ENCODE measurements at regions of chr10 and their contacts with region 1.

Region 1: GRCh38 chr10:103757531-103758293 is 97.7 kb downstream of the SH3PXD2A start:
- DNase-seq: no peak
- CTCF ChIP-seq: no peak

Region 2: DNA sequence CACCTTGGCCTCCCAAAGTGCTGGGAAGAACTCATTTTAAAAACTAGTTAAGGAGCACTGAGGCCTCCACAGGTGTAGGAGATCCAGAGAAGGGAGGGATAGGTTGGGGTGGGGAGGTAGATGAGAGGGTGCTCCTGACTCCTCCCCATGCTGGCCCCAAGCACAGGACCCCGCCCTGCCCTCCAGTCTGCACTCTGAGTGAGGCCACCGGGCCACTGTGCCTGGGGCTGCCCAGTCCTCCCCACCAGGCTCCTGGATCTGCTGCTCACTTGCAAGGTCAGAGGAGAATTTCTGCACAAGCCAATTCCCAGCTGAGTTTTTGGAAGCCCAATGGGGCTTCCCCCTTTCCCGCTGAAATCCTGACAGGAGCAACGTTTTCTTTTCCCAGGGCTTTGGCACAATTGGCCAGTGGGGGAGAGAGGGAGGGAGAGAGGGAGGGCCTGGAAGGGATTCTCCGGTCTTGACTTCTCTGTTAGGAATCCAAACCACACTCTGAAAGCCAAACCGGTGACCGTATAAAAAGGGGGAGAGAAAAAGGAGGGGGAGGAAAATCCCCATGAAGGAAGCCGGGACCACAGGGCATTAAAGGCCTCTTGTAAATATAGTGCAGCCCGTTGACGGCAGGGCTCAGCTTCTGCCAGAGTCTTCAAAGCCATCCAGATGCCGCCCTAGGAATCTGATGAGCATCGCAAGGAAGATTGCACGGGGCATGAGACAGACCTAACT is 18.5 kb before region 1 on chr10:
- CTCF ChIA-PET with region 1: interaction called, 11 read pairs
- POLR2A ChIA-PET with region 1: no interaction called
- DNase-seq: no peak
- CTCF ChIP-seq: no peak

Region 3: DNA sequence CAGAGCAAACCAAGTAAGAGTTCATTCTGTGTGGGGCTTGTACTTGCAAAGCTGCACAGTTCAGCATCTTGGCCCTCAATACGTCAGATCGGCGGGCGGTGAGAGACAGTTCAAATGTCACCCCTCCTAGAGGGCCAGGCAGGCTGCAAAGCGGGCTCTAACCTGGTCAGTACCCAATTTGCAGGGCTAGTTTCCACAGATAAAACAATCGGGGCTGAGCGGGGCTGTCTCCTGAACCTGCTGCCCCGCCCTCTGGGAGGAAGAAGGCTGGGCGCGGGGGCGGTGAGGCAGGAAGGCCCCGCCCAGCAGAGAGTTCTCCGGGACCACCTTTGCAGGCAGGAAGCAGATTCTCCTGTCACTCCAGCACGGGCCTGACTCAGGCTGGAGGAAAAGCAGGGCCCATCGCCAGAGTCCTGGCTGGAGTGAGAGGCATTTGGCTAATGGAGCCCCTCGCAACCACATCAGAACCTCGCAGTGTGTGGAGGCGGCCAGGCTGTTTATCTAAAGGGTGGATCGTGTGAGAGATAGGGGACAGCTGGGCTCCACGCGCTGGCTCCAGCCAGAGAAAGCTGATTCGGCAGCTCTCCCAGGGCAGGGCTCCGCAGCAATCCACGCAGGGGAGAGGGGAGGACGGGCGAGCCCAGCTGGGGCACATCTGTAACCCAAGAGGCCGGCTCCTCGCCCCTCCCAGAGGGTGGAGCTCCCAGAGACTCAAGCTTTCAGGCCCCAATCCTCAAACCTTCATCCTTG is 14.6 kb after region 1 on chr10:
- CTCF ChIA-PET with region 1: interaction called, 29 read pairs
- POLR2A ChIA-PET with region 1: no interaction called
- DNase-seq: peak; percentile 68
- CTCF ChIP-seq: no peak

Measured in GM10248 (cell line).